Natural killer cell (primary cell): ENCODE measurements at regions of chr11 and their contacts with region 1.

Region 1: GRCh38 chr11:85752890-85753581 is 57.9 kb downstream of the SYTL2 start:
- DNase-seq: peak; percentile 79 to 98
- ATAC-seq: peak; percentile 72 to 90 (median 87)
- H3K4me3 ChIP-seq: no peak overlapping the region
- H3K4me3 Mint-ChIP-seq: peak overlapping the region; percentile 92
- H3K27ac ChIP-seq: peak overlapping the region; percentile 96
- H3K27ac Mint-ChIP-seq: peak overlapping the region; percentile 98 to 100
- H3K4me1 ChIP-seq: peaks cover 74% of the 10 kb centered on the region
- H3K4me1 Mint-ChIP-seq: peaks cover 89% of the 10 kb centered on the region in 2 donors
- H3K27me3 ChIP-seq: no peaks in the 10 kb centered on the region
- H3K27me3 Mint-ChIP-seq: no peaks in the 10 kb centered on the region
- CTCF ChIP-seq: no peak

Region 2: DNA sequence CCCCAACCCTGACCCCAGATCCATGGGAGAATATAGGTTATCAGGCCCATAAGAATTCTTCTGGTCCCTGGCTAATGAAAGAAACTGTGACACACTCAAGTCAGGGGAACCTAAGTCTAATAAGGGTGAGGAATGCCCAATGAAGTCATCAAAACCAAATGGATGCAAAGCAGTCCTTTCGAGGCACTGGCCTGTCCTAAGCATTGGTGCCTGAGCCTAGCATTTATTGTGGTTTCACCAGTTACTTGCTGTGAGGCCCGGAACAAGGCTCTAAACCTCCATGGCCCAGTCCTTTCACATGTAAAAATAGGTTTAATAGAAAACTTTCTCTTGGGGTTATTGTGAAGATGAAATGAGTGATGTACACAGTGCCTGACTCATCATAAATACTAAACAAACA is 838.5 kb before region 1 on chr11:
- intact Hi-C with region 1: no loop called
- DNase-seq: no peak
- ATAC-seq: no peak
- H3K4me3 ChIP-seq: no peak overlapping the region
- H3K4me3 Mint-ChIP-seq: no peak overlapping the region
- H3K27ac ChIP-seq: no peak overlapping the region
- H3K27ac Mint-ChIP-seq: no peak overlapping the region
- H3K4me1 ChIP-seq: no peaks in the 10 kb centered on the region
- H3K4me1 Mint-ChIP-seq: no peaks in the 10 kb centered on the region
- H3K27me3 ChIP-seq: no peaks in the 10 kb centered on the region
- H3K27me3 Mint-ChIP-seq: no peaks in the 10 kb centered on the region
- CTCF ChIP-seq: no peak

Region 3: DNA sequence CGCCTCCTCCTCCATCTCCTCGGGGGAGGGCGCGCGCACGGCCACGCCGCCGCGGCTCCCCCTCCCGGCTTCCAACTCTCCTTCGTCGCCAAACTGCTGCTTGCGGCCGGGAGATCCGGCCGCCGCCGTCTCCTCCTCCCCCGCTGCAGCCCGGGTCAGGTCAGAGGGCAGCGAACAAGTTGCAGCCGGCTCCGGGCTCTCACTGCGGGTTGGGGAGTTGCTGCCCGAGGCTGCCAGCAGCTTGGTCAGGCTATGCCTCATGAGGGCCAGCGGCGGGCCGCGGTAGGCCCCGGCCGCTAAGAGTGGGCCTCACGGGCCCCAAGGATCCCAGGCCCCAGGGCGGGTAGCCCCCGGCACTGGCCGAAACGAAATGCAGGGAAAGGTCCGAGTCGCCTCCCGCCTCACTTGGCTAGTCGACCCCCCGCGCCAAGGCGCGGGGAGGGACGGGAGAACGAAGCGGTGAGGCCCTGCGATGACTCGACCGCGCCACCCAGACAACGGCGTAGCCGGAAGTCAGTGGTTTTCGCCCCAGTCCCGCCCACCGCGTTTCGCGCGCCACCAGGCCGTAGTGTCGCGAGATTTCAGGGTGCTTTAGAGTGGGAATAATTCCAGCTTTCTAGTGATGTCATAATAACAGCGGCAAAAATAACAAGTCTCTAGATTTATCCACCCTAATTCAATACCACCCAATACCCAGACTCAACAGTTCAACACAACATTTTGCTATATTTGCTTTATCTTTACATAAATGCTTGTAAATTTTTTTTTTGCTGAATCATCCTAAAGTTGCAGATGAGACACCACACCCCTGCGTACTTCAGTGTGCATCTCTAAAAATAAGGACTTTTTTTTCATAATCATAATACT is 88.2 kb before region 1 on chr11 and contains the start of gene CREBZF:
- intact Hi-C with region 1: loop called (anchors 2 kb)
- DNase-seq: peak; percentile 95 to 96
- ATAC-seq: peak; percentile 72 to 86 (median 79)
- H3K4me3 ChIP-seq: peak within 1 kb of the TSS; percentile 94
- H3K4me3 Mint-ChIP-seq: peak within 1 kb of the TSS; percentile 98
- H3K27ac ChIP-seq: peak within 1 kb of the TSS; percentile 100
- H3K27ac Mint-ChIP-seq: peak within 1 kb of the TSS; percentile 98
- H3K4me1 ChIP-seq: peaks cover 11% of the 10 kb centered on the region
- H3K4me1 Mint-ChIP-seq: peaks cover 50 to 55% of the 10 kb centered on the region in 2 donors
- H3K27me3 ChIP-seq: no peaks in the 10 kb centered on the region
- H3K27me3 Mint-ChIP-seq: no peaks in the 10 kb centered on the region
- CTCF ChIP-seq: no peak
- total RNA-seq, gene CREBZF: 60.1 to 92.7 (median 82.0) TPM

Region 4: DNA sequence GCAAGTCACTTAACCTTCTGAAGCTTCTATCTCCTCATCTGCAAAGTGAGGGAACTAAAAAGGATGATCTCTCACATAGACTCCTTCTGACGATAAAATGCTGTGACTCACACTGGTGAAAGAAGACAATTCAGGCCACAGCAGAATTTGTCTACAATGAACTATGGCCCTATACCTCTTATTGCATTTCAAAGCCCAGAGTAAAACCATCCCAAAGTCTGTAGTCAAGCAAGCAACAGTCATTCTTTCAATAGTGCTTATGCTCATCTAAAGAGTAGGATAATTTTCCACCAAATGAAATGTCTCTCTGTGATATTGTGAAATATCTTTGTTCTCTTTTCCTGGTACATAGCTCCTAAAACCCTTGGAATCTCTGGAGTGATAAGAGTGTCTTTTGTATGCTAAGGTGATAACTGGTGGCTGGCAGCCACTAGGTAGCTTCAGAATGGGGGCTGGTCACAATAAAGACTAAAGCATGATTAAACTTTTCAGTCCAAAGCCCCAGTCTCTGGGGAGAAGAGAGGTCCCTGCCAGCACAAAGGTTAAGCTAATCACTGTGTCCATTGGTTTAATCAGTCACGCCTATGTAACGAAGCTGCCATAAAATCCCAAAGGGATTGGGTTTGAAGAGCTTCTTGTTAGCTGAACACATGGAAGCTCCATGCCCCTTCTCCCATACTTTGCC is 27.1 kb after region 1 on chr11:
- intact Hi-C with region 1: loop called (anchors 2 kb)
- DNase-seq: no peak
- ATAC-seq: peak in 1 of 3 donors; percentile 24
- H3K4me3 ChIP-seq: no peak overlapping the region
- H3K4me3 Mint-ChIP-seq: no peak overlapping the region
- H3K27ac ChIP-seq: no peak overlapping the region
- H3K27ac Mint-ChIP-seq: peak overlapping the region; percentile 73 to 82
- H3K4me1 ChIP-seq: peaks cover 26% of the 10 kb centered on the region
- H3K4me1 Mint-ChIP-seq: peaks cover 79 to 80% of the 10 kb centered on the region in 2 donors
- H3K27me3 ChIP-seq: no peaks in the 10 kb centered on the region
- H3K27me3 Mint-ChIP-seq: no peaks in the 10 kb centered on the region
- CTCF ChIP-seq: no peak

Region 5: DNA sequence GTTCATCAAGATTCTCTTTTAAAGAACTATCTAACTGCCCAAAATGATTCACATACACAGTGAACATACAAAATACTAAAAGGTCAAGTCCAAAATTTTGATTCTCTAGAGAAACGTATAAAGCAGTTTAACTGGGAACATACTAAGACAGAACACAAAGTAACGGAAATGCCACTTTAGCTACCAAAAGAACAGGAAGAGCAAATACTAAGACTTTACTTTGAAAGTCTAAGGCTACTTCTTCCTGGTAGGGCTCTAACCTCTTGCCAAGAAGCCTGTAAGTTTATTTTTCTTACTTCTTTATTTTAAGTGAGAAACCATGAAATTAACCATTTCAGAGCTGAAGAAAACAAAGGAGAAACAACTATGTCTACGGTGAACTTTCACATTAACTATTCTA is 309.7 kb after region 1 on chr11:
- intact Hi-C with region 1: loop called (anchors 5 kb)
- DNase-seq: peak in 1 of 2 donors; percentile 60
- ATAC-seq: peak; percentile 58 to 72 (median 69)
- H3K4me3 ChIP-seq: peak overlapping the region; percentile 22
- H3K4me3 Mint-ChIP-seq: peak overlapping the region; percentile 91
- H3K27ac ChIP-seq: peak overlapping the region; percentile 46
- H3K27ac Mint-ChIP-seq: peak overlapping the region; percentile 97 to 100
- H3K4me1 ChIP-seq: peaks cover 31% of the 10 kb centered on the region
- H3K4me1 Mint-ChIP-seq: peaks cover 88 to 91% of the 10 kb centered on the region in 2 donors
- H3K27me3 ChIP-seq: no peaks in the 10 kb centered on the region
- H3K27me3 Mint-ChIP-seq: no peaks in the 10 kb centered on the region
- CTCF ChIP-seq: no peak

Region 6: GRCh38 chr11:86802601-86803051 is 1049.6 kb after region 1 on chr11:
- intact Hi-C with region 1: loop called (anchors 2 kb)
- DNase-seq: peak in 1 of 2 donors; percentile 43
- ATAC-seq: peak in 2 of 3 donors; percentile 27 to 32
- H3K4me3 ChIP-seq: peak overlapping the region; percentile 75
- H3K4me3 Mint-ChIP-seq: peak overlapping the region; percentile 96
- H3K27ac ChIP-seq: peak overlapping the region; percentile 10
- H3K27ac Mint-ChIP-seq: peak overlapping the region; percentile 88 to 95
- H3K4me1 ChIP-seq: peaks cover 46% of the 10 kb centered on the region
- H3K4me1 Mint-ChIP-seq: peaks cover 71 to 74% of the 10 kb centered on the region in 2 donors
- H3K27me3 ChIP-seq: no peaks in the 10 kb centered on the region
- H3K27me3 Mint-ChIP-seq: no peaks in the 10 kb centered on the region
- CTCF ChIP-seq: peak; percentile 60